ENCODE measurements at regions of chr9 and their contacts with region 1.

Region 1: GRCh38 chr9:36166101-36166927 is 2.9 kb upstream of the CCIN start:
- DNase-seq: peak; percentile 91
- ATAC-seq: peak; percentile 97

Region 2: GRCh38 chr9:36102742-36103495 is 63.4 kb before region 1 on chr9:
- intact Hi-C with region 1: loop called (anchors 1 kb)
- DNase-seq: peak; percentile 90
- ATAC-seq: peak; percentile 96

Measured in Right ventricle myocardium superior (tissue), 1 donor.